Activated CD8-positive, alpha-beta T cell treated with anti-CD3 and anti-CD28 coated beads, Interleukin-2, amount 10 ng/mL, durations not matched to agents 7 days and 5 days (primary cell): ENCODE measurements at regions of chr11 and their contacts with region 1.

Region 1: DNA sequence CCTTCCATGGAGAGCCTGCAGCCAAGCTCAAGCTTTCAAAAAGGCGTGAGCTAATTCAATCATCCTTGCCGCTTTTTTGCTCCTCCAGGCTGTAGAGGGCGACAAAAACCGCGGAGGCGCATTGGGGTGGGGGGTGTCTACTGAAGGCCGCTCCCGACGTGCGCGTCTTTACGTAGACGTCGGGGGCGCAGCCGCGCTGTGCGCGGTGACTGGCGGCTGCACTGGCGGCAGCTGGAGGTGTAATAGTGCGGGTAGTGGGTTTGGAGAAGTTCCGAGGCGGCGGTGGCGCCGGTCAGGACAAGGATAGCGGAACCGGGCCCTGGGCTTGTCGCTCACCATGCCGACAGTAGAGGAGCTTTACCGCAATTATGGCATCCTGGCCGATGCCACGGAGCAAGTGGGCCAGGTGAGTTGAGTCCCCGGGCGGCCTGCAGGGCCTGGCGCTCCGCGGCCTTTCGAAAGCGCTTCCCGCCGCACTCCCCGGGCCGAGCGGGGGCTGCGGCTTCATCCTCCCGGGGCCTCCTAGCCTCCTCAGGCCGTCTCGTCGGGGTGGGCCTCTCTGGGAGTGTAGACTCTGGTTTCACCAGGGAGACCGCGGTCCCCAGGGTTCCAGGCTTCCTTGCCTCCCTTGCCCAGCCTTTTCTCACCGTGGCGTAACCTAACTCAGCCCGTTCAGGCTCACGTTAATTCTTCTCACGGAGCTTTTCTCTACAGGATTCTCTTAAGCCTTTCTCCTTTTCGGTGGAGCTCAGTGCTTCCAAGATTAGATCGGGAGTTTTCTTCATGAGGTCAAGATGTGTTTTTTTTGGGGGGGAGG is at the start of gene API5:
- DNase-seq: peak; percentile 95
- ATAC-seq: peak; percentile 91
- H3K4me3 Mint-ChIP-seq: peak within 1 kb of the TSS; percentile 94
- H3K27ac Mint-ChIP-seq: peak within 1 kb of the TSS; percentile 88
- H3K4me1 Mint-ChIP-seq: peaks cover 46% of the 10 kb centered on the region
- H3K27me3 Mint-ChIP-seq: no peaks in the 10 kb centered on the region
- total RNA-seq, gene API5: 108 to 115 TPM

Region 2: GRCh38 chr11:43327987-43328386 is 16.0 kb after region 1 on chr11:
- CTCF ChIA-PET with region 1: interaction called, 12 read pairs
- POLR2A ChIA-PET with region 1: interaction called, 3 read pairs
- DNase-seq: no peak
- ATAC-seq: no peak
- H3K4me3 Mint-ChIP-seq: no peak overlapping the region
- H3K27ac Mint-ChIP-seq: no peak overlapping the region
- H3K4me1 Mint-ChIP-seq: no peaks in the 10 kb centered on the region
- H3K27me3 Mint-ChIP-seq: no peaks in the 10 kb centered on the region

Region 3: GRCh38 chr11:43358801-43359421 is 46.9 kb after region 1 on chr11 and contains the start of gene TTC17:
- CTCF ChIA-PET with region 1: interaction called, 31 read pairs
- POLR2A ChIA-PET with region 1: interaction called, 27 read pairs
- DNase-seq: peak; percentile 96
- ATAC-seq: peak; percentile 96
- H3K4me3 Mint-ChIP-seq: peak within 1 kb of the TSS; percentile 84
- H3K27ac Mint-ChIP-seq: peak within 1 kb of the TSS; percentile 98
- H3K4me1 Mint-ChIP-seq: peaks cover 43% of the 10 kb centered on the region
- H3K27me3 Mint-ChIP-seq: no peaks in the 10 kb centered on the region
- total RNA-seq, gene TTC17: 56.9 to 60.5 TPM

Region 4: GRCh38 chr11:43419460-43419859 is 107.5 kb after region 1 on chr11:
- CTCF ChIA-PET with region 1: interaction called, 38 read pairs
- POLR2A ChIA-PET with region 1: no interaction called
- DNase-seq: peak; percentile 70
- ATAC-seq: peak; percentile 65
- H3K4me3 Mint-ChIP-seq: no peak overlapping the region
- H3K27ac Mint-ChIP-seq: no peak overlapping the region
- H3K4me1 Mint-ChIP-seq: peaks cover 3% of the 10 kb centered on the region
- H3K27me3 Mint-ChIP-seq: no peaks in the 10 kb centered on the region

Region 5: GRCh38 chr11:43567396-43567975 is 255.5 kb after region 1 on chr11:
- CTCF ChIA-PET with region 1: interaction called, 11 read pairs
- POLR2A ChIA-PET with region 1: interaction called, 4 read pairs
- DNase-seq: peak; percentile 32
- ATAC-seq: no peak
- H3K4me3 Mint-ChIP-seq: no peak overlapping the region
- H3K27ac Mint-ChIP-seq: no peak overlapping the region
- H3K4me1 Mint-ChIP-seq: no peaks in the 10 kb centered on the region
- H3K27me3 Mint-ChIP-seq: peaks cover 31% of the 10 kb centered on the region